ENCODE measurements at regions of chr14 and their contacts with region 1.

Region 1: GRCh38 chr14:67187210-67187609 is 2.0 kb upstream of the GARIN2 start:
- DNase-seq: peak; percentile 38
- ATAC-seq: peak; percentile 55; the same call in 2 of the 3 replicates
- H3K4me3 ChIP-seq: no peak overlapping the region
- H3K27ac ChIP-seq: no peak overlapping the region
- H3K4me1 ChIP-seq: peaks cover 22% of the 10 kb centered on the region
- H3K27me3 ChIP-seq: no peaks in the 10 kb centered on the region
- CTCF ChIP-seq: no peak
- EP300 ChIP-seq: no peak
- POLR2A ChIP-seq: no peak
- RAD21 ChIP-seq: no peak

Region 2: GRCh38 chr14:66677780-66678179 is 509.4 kb before region 1 on chr14:
- CTCF ChIA-PET with region 1: no interaction called
- POLR2A ChIA-PET with region 1: no interaction called
- in situ Hi-C with region 1: no loop called
- intact Hi-C with region 1: loop called (anchors 2 kb)
- DNase-seq: no peak
- ATAC-seq: no peak
- H3K4me3 ChIP-seq: no peak overlapping the region
- H3K27ac ChIP-seq: no peak overlapping the region
- H3K4me1 ChIP-seq: no peaks in the 10 kb centered on the region
- H3K27me3 ChIP-seq: no peaks in the 10 kb centered on the region
- CTCF ChIP-seq: no peak
- EP300 ChIP-seq: no peak
- POLR2A ChIP-seq: no peak
- RAD21 ChIP-seq: no peak

Region 3: GRCh38 chr14:66998013-66998412 is 189.2 kb before region 1 on chr14:
- CTCF ChIA-PET with region 1: no interaction called
- POLR2A ChIA-PET with region 1: no interaction called
- in situ Hi-C with region 1: no loop called
- intact Hi-C with region 1: no loop called
- DNase-seq: no peak
- ATAC-seq: no peak
- H3K4me3 ChIP-seq: no peak overlapping the region
- H3K27ac ChIP-seq: no peak overlapping the region
- H3K4me1 ChIP-seq: peaks cover 16% of the 10 kb centered on the region
- H3K27me3 ChIP-seq: no peaks in the 10 kb centered on the region
- CTCF ChIP-seq: no peak
- EP300 ChIP-seq: no peak
- POLR2A ChIP-seq: no peak
- RAD21 ChIP-seq: no peak

Measured in HepG2 (cell line).